ENCODE measurements at regions of chr16 and their contacts with region 1.

Region 1: DNA sequence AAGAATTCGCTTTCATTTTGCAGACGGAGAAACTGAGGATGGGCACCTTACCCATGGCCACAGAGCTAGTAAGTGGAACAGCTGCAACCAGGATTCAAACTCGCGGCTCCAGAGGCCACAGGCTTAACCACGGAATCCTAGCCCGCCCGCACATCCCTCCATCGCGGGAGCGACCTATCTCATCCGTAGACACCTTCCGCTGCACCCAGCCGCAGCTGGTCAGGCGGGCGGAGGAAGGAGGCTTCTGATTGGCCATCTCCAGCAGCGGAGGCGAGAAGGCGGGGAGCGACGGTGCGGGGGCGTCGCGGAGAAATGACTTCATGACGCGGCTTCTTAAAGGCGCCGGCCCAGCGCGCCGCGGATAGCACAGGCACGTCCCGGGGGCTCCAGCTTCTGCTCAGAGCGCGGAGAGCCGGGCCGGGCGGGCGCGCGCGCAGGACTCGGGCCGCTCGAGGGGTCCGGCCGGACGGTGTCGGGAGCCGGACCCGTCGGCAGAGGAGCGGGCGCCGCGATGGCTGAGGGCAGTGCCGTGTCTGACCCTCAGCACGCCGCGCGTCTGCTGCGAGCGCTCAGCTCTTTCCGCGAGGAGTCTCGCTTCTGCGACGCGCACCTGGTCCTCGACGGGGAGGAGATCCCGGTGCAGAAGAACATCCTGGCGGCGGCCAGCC is at the start of gene GAN:
- DNase-seq: peak; percentile 92 to 97
- ATAC-seq: peak; percentile 94 to 99
- H3K4me3 ChIP-seq: peak within 1 kb of the TSS; percentile 76
- H3K27ac ChIP-seq: peak within 1 kb of the TSS; percentile 83 to 89
- H3K4me1 ChIP-seq: peaks cover 43% of the 10 kb centered on the region
- CTCF ChIP-seq: no peak
- EP300 ChIP-seq: no peak
- POLR2A ChIP-seq: peak; percentile 67
- RAD21 ChIP-seq: no peak
- polyA plus RNA-seq, gene GAN: 6.5 and 8.1 TPM in 2 replicates

Region 2: DNA sequence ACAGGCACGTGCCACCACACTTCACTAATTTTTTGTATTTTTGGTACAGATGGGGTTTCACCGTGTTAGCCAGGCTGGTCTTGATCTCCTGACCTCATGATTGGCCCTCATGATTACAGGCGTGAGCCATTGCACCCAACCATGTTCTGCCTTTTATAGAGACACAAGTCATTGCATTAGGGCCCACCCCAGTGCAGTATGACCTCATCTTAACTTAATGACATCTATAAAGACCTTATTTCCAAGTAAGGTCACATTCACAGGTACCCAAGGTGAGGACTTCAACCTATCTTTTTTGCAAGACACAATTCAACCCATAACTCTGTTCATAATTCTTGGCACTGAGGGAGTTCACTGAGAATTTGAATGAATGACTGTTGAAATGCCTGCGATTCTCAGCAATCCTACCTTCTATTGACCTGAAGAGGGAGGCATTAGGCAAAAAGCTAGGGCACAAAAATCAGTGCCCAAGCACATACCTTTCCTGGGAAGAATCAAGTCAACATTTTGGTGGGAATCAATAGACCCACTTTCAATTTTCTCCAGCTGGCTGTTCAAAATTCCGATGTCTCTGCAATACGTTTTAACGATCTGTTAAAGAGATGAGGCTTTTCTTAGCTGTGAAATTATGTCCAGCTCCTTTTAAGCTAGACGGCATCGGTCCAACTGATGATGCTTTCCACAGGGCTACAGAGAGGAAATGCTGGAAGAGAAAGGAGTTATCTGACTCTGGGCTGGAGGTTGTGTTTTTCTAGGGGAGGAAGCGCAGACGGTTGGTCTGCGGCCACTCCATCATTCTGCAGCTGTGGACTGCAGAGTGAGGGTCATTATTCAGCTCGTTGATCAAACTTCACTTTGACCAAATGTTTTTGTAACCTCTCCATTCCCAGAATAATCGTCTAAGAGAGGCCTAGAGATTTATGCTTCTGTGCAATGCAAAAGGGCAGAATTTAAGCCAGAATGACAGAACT is 51.2 kb before region 1 on chr16:
- CTCF ChIA-PET with region 1: interaction called, 4 read pairs
- POLR2A ChIA-PET with region 1: interaction called, 11 read pairs
- DNase-seq: no peak
- ATAC-seq: peak in 1 of 2 experiments; percentile 61; a peak in 2 of 6 replicates
- H3K4me3 ChIP-seq: no peak overlapping the region
- H3K27ac ChIP-seq: no peak overlapping the region
- H3K4me1 ChIP-seq: no peaks in the 10 kb centered on the region
- CTCF ChIP-seq: no peak
- EP300 ChIP-seq: no peak
- POLR2A ChIP-seq: no peak
- RAD21 ChIP-seq: 0 out of 5 replicates have a peak, but pooled peaks of 1 of the 2 experiments have one; percentile 38

Measured in A549 (cell line).